Spleen (tissue), 13 donors: ENCODE measurements at regions of chr3 and their contacts with region 1.

Region 1: DNA sequence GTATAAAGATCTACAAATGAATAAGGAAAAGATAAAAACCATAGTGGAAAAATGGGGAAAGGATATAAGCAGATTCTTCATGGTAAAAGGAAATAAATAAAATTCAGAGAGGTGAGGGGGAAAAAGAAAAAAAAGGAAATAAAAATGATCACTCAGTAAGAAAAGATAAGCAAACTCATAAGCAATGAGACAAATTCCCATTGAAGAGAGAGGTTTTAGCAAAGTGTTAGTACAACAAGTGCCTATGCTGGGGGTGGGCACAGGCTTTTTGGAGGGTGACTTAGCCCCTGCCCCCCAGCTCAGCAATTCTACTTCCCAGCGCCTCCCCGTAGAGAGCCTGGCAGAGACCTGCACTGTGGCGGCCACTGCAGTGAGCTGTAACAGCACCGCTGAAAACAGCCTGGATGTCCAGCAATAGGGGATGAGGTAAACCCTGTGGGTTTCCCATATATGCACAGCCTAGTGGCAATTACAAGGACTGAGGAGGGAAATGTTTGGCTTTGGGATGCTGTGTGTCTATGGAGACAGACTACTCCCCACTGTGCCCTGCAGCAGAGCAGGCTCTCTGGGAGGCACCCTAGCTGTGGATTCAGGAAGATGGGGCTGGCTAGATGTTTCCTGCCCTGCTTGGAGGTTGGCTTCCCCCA is 23.7 kb upstream of the SFMBT1 start:
- DNase-seq: peak; percentile 41
- H3K4me3 ChIP-seq: no peak overlapping the region
- H3K27ac ChIP-seq: no peak overlapping the region
- H3K4me1 ChIP-seq: peaks cover 0 to 25% (median 20%) of the 10 kb centered on the region in 6 donors
- H3K27me3 ChIP-seq: peaks cover 0 to 11% (median 0%) of the 10 kb centered on the region in 7 donors
- CTCF ChIP-seq: no peak
- POLR2A ChIP-seq: no peak

Region 2: GRCh38 chr3:52934630-52935530 is 134.7 kb before region 1 on chr3:
- intact Hi-C with region 1: loop called (anchors 10 kb)
- DNase-seq: no peak
- H3K4me3 ChIP-seq: no peak overlapping the region
- H3K27ac ChIP-seq: no peak overlapping the region
- H3K4me1 ChIP-seq: peaks cover 0 to 28% (median 7%) of the 10 kb centered on the region in 6 donors
- H3K27me3 ChIP-seq: no peaks in the 10 kb centered on the region
- CTCF ChIP-seq: peak; percentile 50 to 85 (median 75)
- POLR2A ChIP-seq: no peak

Region 3: DNA sequence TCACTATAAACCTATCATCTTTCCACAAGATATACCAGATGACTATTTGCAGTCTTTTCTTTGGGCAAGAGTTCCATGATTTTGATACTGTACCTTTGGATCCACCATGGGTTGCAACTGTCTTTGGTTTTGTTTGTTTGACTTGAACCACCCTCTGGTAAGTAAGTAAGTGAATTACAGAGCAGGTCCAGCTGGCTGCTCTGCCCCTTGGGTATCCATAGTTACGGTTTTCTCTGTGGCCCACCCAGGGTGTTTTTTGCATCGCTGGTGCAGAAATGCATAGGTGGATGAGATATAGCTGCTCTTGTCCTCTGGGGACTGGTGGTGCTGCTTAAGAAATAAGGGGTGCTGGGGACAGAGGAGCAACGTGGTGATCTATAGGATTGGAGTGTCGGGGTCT is 742.9 kb after region 1 on chr3:
- intact Hi-C with region 1: no loop called
- DNase-seq: no peak
- H3K4me3 ChIP-seq: no peak overlapping the region
- H3K27ac ChIP-seq: no peak overlapping the region
- H3K4me1 ChIP-seq: no peaks in the 10 kb centered on the region
- H3K27me3 ChIP-seq: peaks cover 0 to 4% (median 0%) of the 10 kb centered on the region in 7 donors
- CTCF ChIP-seq: peak in 1 of 11 experiments; percentile 10
- POLR2A ChIP-seq: no peak